ENCODE measurements at regions of chr1 and their contacts with region 1.

Region 1: DNA sequence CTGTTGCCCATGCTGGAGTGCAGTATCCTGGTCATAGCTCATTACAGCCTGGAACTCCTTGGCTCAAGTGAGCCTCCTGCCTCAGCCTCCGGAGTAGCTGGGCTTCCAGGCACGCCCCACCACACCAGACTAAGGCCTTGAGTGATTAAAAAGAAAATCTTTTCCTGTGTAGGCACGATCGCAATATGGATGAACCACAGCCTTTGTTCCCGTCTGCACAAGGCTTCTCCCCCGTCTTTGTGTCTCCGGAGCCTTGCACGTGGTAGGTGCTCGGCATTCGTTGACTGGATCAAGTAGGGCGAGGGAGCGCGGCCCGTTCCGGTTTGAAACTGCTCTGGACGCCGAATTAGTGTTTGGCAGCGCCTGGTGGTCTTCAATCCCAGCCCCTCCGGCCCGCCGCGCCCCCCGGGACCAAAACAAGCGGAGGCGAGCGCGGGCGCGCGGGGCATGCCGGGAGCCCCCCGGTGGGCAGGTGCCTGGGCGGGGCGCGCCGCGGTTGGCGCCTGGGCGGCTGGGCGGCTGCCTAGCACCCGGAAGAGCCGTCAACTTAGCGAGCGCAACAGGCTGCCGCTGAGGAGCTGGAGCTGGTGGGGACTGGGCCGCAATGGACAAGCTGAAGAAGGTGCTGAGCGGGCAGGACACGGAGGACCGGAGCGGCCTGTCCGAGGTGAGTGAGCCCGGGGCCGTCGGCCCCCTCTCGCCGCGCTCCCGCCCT is at the start of gene SFT2D2:
- DNase-seq: peak; percentile 91
- ATAC-seq: peak; percentile 96
- total RNA-seq, gene SFT2D2: 16.9 TPM

Region 2: DNA sequence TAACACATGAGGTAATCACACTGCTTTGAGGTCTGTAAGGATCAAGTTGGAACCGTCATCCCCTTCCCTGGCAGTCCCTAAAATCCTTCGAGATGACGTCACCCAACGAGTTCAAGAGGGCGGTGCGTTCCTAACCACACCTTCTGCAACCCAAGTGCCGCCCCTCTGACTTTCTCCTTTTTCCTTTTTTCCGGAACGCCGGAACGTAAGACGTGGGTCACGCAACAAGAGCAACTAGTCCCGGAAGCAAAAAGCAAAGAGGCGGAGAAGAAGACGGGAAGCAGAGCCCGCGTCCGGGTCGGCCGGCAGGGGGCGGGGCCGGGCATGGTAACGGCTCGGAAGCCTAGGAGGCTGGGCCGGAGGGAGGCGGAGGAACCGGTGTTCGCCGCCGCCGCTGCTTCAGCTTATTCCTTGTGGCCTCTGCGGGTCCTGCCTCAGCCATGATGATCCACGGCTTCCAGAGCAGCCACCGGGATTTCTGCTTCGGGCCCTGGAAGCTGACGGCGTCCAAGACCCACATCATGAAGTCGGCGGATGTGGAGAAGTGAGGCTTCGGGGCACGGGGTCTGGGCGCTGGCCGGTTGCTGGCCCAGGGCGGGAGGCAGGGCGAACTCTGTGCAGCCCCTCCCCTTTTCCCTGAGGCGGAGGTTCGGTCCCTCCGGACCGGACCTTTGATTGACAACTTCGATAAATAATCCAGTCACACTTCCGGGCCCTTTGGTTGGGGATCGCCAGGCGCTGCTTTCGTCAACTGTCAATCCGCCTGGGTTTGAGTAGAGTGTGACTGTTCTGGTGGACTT is 46.8 kb before region 1 on chr1 and contains the start of gene TIPRL:
- intact Hi-C with region 1: loop called (anchors 5 kb)
- DNase-seq: peak; percentile 98
- ATAC-seq: peak; percentile 98
- total RNA-seq, gene TIPRL: 28.7 TPM